ENCODE measurements at regions of chr1 and their contacts with region 1.

Region 1: GRCh38 chr1:31394628-31395193 is 18.3 kb upstream of the SERINC2 start:
- DNase-seq: peak; percentile 76 to 88
- H3K4me3 ChIP-seq: peak overlapping the region; percentile 33; the same call in 1 of the 2 replicates
- H3K27ac ChIP-seq: no peak overlapping the region
- H3K4me1 ChIP-seq: peaks cover 30% of the 10 kb centered on the region
- H3K27me3 ChIP-seq: no peaks in the 10 kb centered on the region
- CTCF ChIP-seq: peak; percentile 78

Region 2: DNA sequence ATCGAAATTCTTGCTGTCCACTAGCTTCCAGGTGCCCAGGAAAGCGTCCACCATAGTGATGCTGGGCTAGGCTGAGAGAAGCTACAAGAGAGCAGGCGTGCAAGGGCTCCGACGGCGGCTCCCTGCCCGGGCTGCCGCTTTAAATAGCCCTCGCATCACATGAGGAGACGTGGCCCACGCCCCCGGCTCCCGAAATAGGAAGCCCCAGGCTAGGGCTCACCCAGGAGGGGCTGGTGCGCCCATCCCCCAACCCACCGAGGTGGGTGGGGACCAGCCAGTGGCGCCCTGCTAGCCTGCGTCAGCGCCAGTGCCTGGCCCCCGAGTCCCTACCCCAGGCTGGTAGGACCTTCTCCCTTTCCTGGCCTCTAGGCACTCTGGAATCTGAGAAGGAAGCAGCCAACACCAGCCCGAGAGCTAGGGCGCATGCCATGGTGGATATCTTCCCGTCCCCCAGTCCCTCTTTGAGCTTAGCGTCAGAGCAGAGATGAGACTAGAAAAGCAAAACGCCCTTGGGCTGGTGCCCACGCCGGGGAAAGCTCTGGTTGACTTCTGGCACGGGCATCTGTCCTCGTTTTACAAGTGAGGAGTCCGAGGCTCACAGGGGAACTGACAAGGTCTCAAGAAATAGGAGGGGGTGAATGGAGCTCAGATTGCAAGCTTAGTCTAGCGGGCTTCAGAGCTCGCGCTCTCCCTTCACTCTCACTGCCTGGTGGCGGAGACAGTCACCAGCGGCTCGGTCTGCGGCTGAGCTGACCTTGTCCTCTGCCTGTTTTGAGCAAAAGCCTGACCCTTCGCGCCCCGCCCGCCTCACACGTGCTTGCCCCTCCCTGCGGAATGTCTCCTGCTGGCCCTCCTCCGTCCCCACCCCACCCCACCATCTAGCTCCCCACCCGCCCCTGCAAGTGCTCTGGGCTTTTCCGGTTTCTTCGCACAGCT is 21.5 kb before region 1 on chr1 and contains the start of gene FABP3:
- CTCF ChIA-PET with region 1: interaction called, 11 read pairs
- POLR2A ChIA-PET with region 1: interaction called, 5 read pairs
- intact Hi-C with region 1: loop called (anchors 1 kb)
- DNase-seq: peak in 1 of 2 experiments; percentile 82
- H3K4me3 ChIP-seq: no peak within 1 kb of the TSS; the same call in 1 of the 2 replicates
- H3K27ac ChIP-seq: no peak within 1 kb of the TSS
- H3K4me1 ChIP-seq: no peaks in the 10 kb centered on the region
- H3K27me3 ChIP-seq: no peaks in the 10 kb centered on the region
- CTCF ChIP-seq: no peak
- total RNA-seq, gene FABP3: not detected in 2 replicates

Region 3: GRCh38 chr1:31422505-31423319 is 28.0 kb after region 1 on chr1:
- CTCF ChIA-PET with region 1: interaction called, 12 read pairs
- POLR2A ChIA-PET with region 1: no interaction called
- intact Hi-C with region 1: loop called (anchors 1 kb)
- DNase-seq: peak; percentile 81 to 82
- H3K4me3 ChIP-seq: no peak overlapping the region
- H3K27ac ChIP-seq: peak overlapping the region; percentile 82
- H3K4me1 ChIP-seq: peaks cover 27% of the 10 kb centered on the region
- H3K27me3 ChIP-seq: no peaks in the 10 kb centered on the region
- CTCF ChIP-seq: peak; percentile 86

Region 4: GRCh38 chr1:31470794-31471340 is 76.2 kb after region 1 on chr1:
- CTCF ChIA-PET with region 1: no interaction called
- POLR2A ChIA-PET with region 1: no interaction called
- intact Hi-C with region 1: loop called (anchors 1 kb)
- DNase-seq: peak; percentile 10 to 49
- H3K4me3 ChIP-seq: peak overlapping the region; percentile 43; the same call in 1 of the 2 replicates
- H3K27ac ChIP-seq: peak overlapping the region; percentile 97
- H3K4me1 ChIP-seq: peaks cover 26% of the 10 kb centered on the region
- H3K27me3 ChIP-seq: no peaks in the 10 kb centered on the region
- CTCF ChIP-seq: no peak

Measured in PC-9 (cell line).